PC-9 (cell line): ENCODE measurements at regions of chr19 and their contacts with region 1.

Region 1: GRCh38 chr19:662962-663681 is at the start of gene RNF126:
- DNase-seq: peak; percentile 66 to 87
- H3K4me3 ChIP-seq: peak within 1 kb of the TSS; percentile 99
- H3K27ac ChIP-seq: peak within 1 kb of the TSS; percentile 61
- H3K4me1 ChIP-seq: peaks cover 14% of the 10 kb centered on the region
- H3K27me3 ChIP-seq: no peaks in the 10 kb centered on the region
- CTCF ChIP-seq: no peak
- total RNA-seq, gene RNF126: 54.4 and 63.7 TPM in 2 replicates

Region 2: DNA sequence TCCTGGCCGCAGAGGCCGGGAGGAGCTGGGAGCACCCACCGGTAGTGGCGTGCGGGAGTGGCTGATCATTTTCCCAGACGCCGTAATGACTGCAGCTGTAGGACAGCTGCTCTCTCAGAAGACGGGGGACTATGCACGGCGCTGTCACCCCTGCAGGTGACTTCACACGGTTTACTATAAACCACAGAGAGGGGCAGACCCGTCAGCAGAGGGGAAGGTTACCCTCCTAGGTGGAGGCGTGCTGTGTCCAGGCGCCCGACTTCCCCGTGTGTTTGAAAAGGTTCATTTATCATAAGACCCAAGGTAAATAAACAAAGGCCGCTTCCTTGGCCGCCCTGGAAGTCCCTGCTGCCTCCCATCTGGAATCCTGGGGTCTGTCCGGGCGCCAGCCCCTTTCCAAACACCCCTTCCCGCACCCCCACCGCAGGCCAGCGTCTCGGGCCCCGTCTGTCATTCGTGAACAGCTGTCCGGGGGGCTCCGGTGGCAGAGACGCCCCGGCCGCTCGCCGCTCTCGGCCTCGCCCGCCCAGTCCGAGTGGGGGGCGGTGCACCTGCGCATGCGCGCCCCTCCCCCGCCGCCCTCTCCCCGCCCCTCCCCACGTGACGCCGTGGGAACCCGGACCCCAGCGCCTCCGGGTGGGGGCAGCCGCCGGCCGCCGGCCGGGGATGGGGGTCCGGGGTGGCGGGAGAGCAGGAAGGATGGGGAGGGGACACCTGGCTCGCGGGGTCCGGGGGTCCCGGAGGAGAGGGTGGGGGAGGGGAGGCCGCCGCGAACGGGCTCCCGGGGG is 203.2 kb before region 1 on chr19:
- CTCF ChIA-PET with region 1: no interaction called
- POLR2A ChIA-PET with region 1: no interaction called
- intact Hi-C with region 1: no loop called
- DNase-seq: peak in 1 of 2 experiments; percentile 51
- H3K4me3 ChIP-seq: peak overlapping the region; percentile 67
- H3K27ac ChIP-seq: no peak overlapping the region
- H3K4me1 ChIP-seq: no peaks in the 10 kb centered on the region
- H3K27me3 ChIP-seq: peaks cover 33% of the 10 kb centered on the region
- CTCF ChIP-seq: no peak

Region 3: GRCh38 chr19:531009-531752 is 131.9 kb before region 1 on chr19:
- CTCF ChIA-PET with region 1: no interaction called
- POLR2A ChIA-PET with region 1: interaction called, 6 read pairs
- intact Hi-C with region 1: loop called (anchors 2 kb)
- DNase-seq: peak; percentile 58 to 93
- H3K4me3 ChIP-seq: peak overlapping the region; percentile 86
- H3K27ac ChIP-seq: peak overlapping the region; percentile 38
- H3K4me1 ChIP-seq: peaks cover 48% of the 10 kb centered on the region
- H3K27me3 ChIP-seq: no peaks in the 10 kb centered on the region
- CTCF ChIP-seq: no peak

Region 4: GRCh38 chr19:677201-677600 is 14.1 kb after region 1 on chr19:
- CTCF ChIA-PET with region 1: no interaction called
- POLR2A ChIA-PET with region 1: interaction called, 4 read pairs
- intact Hi-C with region 1: loop called (anchors 1 kb)
- DNase-seq: peak; percentile 70 to 92
- H3K4me3 ChIP-seq: peak overlapping the region; percentile 72
- H3K27ac ChIP-seq: peak overlapping the region; percentile 43; the same call in 1 of the 2 replicates
- H3K4me1 ChIP-seq: peaks cover 30% of the 10 kb centered on the region
- H3K27me3 ChIP-seq: no peaks in the 10 kb centered on the region
- CTCF ChIP-seq: no peak

Region 5: DNA sequence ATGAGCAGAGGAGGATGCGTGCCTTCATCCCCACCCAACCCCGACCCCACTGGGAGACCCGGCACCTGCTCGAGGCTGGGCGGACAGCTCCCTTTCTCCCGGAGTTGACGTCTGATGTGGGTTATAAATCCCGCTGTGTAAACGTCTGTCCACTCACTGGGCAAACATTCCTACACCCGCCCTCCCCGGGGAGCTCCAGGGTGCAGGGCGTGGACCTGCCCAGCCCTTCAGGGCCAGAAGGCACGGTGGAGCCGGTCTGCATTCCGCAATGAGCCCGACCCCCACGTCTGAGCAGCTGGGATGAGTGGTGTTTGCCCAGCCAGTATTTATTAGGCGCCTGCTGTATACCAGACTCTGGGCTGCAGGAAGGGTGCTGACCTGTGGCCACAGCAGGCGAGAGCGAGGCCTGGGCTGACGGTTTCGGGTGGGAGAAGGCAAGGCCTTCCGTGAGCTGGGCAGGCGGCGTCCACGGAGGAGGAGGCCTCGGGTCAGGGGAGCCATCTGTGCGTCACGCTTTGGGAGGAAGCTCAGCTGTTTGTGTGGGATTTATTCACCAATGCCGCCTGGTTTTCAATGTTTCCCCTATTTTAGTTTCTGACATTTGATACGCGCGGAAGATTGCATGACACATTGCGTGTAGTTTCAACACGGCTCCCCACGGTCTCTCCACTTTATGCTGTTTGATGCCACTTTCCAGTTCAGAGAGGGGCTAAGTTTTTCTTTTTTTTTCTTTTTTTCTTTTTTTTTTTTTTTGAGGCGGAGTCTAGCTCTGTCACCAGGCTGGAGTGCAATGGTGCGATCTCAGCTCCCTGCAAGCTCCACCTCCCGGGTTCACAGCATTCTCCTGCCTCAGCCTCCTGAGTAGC is 89.8 kb after region 1 on chr19:
- CTCF ChIA-PET with region 1: no interaction called
- POLR2A ChIA-PET with region 1: interaction called, 5 read pairs
- intact Hi-C with region 1: loop called (anchors 5 kb)
- DNase-seq: peak; percentile 97
- H3K4me3 ChIP-seq: peak overlapping the region; percentile 48; the same call in 1 of the 2 replicates
- H3K27ac ChIP-seq: peak overlapping the region; percentile 89
- H3K4me1 ChIP-seq: peaks cover 22% of the 10 kb centered on the region
- H3K27me3 ChIP-seq: no peaks in the 10 kb centered on the region
- CTCF ChIP-seq: no peak

Region 6: DNA sequence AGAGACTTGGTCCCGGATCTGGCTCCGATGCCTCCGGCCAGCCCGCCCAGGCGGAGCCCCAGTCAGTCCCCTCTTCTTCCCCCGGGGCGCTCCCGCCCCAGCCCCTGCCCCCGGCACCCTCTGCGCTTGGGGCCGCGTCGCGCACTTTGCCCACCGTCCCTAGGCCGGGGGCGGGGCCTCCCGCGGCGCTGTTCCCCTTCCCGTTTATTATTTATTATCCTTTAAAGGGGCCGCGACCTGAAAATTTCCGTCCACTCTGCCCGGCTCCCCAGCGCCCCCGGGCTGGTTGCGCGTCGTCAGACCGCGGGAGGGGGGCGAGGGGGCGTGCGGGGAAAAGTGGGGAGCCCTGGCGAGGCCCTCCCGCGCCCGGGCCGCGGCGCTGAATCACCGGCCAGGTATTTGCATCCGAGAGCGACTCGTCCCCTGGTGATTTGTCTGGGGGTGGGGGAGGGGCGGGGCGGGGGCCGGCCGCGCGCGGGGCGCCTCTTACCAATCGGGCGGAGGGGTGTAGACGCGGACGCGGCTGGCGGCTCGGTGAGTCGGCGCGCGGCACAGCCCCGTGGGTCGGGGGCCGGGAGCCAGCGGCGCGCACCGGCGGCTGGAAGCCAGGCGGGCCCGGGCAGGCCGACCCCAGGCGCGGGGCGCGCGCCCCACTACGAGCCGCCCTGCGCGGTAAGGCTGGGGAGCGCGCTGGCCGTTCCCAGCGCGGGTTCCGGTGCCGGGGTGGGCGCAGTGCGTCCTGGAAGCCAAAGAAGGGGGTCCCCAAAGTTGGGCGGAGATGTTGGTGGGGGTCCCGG is 262.6 kb after region 1 on chr19 and contains the start of gene ARID3A:
- CTCF ChIA-PET with region 1: no interaction called
- POLR2A ChIA-PET with region 1: no interaction called
- intact Hi-C with region 1: loop called (anchors 10 kb)
- DNase-seq: peak; percentile 53 to 80
- H3K4me3 ChIP-seq: peak within 1 kb of the TSS; percentile 77
- H3K27ac ChIP-seq: no peak within 1 kb of the TSS
- H3K4me1 ChIP-seq: no peaks in the 10 kb centered on the region; the same call in 1 of the 2 replicates
- H3K27me3 ChIP-seq: no peaks in the 10 kb centered on the region; the same call in 1 of the 2 replicates
- CTCF ChIP-seq: no peak
- total RNA-seq, gene ARID3A: 9.2 and 10.7 TPM in 2 replicates